Activated CD4-positive, alpha-beta T cell treated with anti-CD3 and anti-CD28 coated beads, Interleukin-2, amount 10 ng/mL, durations not matched to agents 7 days and 5 days (primary cell): ENCODE measurements at regions of chr3 and their contacts with region 1.

Region 1: GRCh38 chr3:197590313-197590962 is 34.7 kb upstream of the BDH1 start:
- DNase-seq: no peak
- H3K4me3 Mint-ChIP-seq: no peak overlapping the region
- H3K27ac Mint-ChIP-seq: peak overlapping the region; percentile 9
- H3K4me1 Mint-ChIP-seq: peaks cover 16% of the 10 kb centered on the region
- H3K27me3 Mint-ChIP-seq: peaks cover 4% of the 10 kb centered on the region

Region 2: GRCh38 chr3:197456261-197457091 is 134.0 kb before region 1 on chr3:
- CTCF ChIA-PET with region 1: no interaction called
- POLR2A ChIA-PET with region 1: no interaction called
- DNase-seq: peak; percentile 39
- H3K4me3 Mint-ChIP-seq: peak overlapping the region; percentile 72
- H3K27ac Mint-ChIP-seq: peak overlapping the region; percentile 84
- H3K4me1 Mint-ChIP-seq: peaks cover 18% of the 10 kb centered on the region
- H3K27me3 Mint-ChIP-seq: peaks cover 28% of the 10 kb centered on the region

Region 3: DNA sequence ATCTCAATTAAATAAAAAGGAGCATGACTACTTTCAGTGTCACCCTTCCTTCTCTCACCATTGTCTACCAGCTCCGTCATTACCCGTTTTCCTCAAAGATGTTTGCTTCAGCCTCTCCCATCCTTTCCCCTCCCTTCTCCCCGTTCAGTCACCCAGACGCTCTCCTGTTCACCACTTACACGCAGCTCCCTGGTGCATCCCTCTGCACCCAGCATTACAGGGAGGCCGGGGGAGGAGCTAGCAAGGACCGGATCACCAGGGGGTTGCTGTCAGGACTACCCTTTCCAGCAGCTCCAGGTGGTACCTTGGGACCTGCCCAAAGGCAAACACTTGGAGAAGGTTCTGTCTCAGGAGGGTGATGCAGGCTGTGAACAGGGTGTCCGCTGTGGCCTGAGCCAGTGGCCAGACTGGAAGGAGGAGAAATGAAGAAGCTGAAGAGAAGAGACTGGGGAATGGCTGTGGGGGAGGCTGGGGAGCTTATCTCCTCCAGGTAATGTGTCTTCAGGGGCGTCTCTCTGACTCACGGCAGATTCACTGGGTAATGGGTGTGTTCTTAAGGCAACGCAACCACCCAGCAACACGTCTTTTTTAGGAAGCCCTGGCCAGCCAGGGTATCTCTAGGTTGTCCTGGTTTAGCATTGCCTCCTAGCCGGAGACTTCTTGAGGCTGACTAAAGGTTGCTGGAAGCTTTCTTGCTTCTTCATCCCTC is 12.9 kb before region 1 on chr3:
- CTCF ChIA-PET with region 1: interaction called, 11 read pairs
- POLR2A ChIA-PET with region 1: interaction called, 3 read pairs
- DNase-seq: no peak
- H3K4me3 Mint-ChIP-seq: no peak overlapping the region
- H3K27ac Mint-ChIP-seq: no peak overlapping the region
- H3K4me1 Mint-ChIP-seq: no peaks in the 10 kb centered on the region
- H3K27me3 Mint-ChIP-seq: peaks cover 9% of the 10 kb centered on the region